IMR-90 (cell line): ENCODE measurements at regions of chr5 and their contacts with region 1.

Region 1: GRCh38 chr5:104431981-104432380 is 869.4 kb upstream of the NUDT12 start:
- DNase-seq: no peak
- ATAC-seq: no peak
- H3K4me3 ChIP-seq: no peak overlapping the region
- H3K27ac ChIP-seq: no peak overlapping the region
- H3K4me1 ChIP-seq: no peaks in the 10 kb centered on the region
- H3K27me3 ChIP-seq: no peaks in the 10 kb centered on the region
- CTCF ChIP-seq: no peak
- POLR2A ChIP-seq: no peak
- RAD21 ChIP-seq: no peak

Region 2: GRCh38 chr5:105677291-105677690 is 1245.3 kb after region 1 on chr5:
- CTCF ChIA-PET with region 1: no interaction called
- POLR2A ChIA-PET with region 1: no interaction called
- dilution Hi-C with region 1: no loop called
- in situ Hi-C with region 1: no loop called
- intact Hi-C with region 1: loop called (anchors 5 kb)
- DNase-seq: peak; percentile 0
- ATAC-seq: no peak
- H3K4me3 ChIP-seq: no peak overlapping the region
- H3K27ac ChIP-seq: no peak overlapping the region
- H3K4me1 ChIP-seq: no peaks in the 10 kb centered on the region
- H3K27me3 ChIP-seq: no peaks in the 10 kb centered on the region
- CTCF ChIP-seq: no peak
- POLR2A ChIP-seq: no peak
- RAD21 ChIP-seq: no peak